ENCODE measurements at regions of chr9 and their contacts with region 1.

Region 1: GRCh38 chr9:88041447-88041846 is 67.1 kb upstream of the CDK20 start:
- DNase-seq: no peak
- H3K4me3 ChIP-seq: no peak overlapping the region
- H3K27me3 ChIP-seq: no peaks in the 10 kb centered on the region
- CTCF ChIP-seq: peak; percentile 57

Region 2: GRCh38 chr9:87678650-87679515 is 362.6 kb before region 1 on chr9:
- CTCF ChIA-PET with region 1: interaction called, 14 read pairs
- POLR2A ChIA-PET with region 1: no interaction called
- DNase-seq: no peak
- H3K4me3 ChIP-seq: no peak overlapping the region
- H3K27me3 ChIP-seq: no peaks in the 10 kb centered on the region
- CTCF ChIP-seq: peak; percentile 82

Region 3: DNA sequence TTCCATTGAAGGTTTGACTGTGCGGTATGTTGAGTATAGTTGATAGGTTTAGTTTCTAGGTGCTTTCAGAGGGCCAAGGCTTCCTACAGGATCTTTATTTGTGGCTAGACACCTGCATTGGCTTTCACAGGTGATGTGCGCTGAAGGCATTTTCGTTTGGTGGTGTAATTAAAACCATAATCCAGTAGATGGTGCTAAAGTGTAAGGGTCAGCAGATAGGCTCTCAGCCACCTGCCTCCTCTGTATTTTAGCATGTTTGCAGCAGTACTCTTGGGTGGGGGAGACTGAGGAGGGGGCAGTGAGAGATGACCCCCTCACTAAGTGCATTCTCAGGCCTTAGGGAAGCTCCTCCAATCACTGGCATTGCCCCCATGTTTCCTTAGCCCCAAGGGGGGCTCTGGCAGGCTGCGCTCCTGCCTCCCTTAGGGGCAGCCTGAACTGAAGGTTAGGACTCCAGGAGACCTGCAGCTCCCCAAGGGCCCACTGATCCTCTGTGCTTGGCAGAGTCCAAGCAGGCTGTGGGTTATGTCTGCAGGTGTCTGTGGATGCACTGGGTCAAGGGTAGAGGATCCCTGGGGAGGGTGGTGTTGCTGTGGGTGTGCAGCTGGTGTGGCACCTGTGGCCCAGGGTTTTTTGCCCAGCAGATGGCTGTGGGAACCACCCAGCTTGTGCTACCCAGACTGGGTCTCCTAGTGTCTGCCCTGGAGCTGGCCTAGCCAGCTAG is 90.5 kb before region 1 on chr9:
- CTCF ChIA-PET with region 1: interaction called, 11 read pairs
- POLR2A ChIA-PET with region 1: no interaction called
- DNase-seq: no peak
- H3K4me3 ChIP-seq: no peak overlapping the region
- H3K27me3 ChIP-seq: no peaks in the 10 kb centered on the region; the same call in 1 of the 2 replicates
- CTCF ChIP-seq: peak; percentile 54

Region 4: DNA sequence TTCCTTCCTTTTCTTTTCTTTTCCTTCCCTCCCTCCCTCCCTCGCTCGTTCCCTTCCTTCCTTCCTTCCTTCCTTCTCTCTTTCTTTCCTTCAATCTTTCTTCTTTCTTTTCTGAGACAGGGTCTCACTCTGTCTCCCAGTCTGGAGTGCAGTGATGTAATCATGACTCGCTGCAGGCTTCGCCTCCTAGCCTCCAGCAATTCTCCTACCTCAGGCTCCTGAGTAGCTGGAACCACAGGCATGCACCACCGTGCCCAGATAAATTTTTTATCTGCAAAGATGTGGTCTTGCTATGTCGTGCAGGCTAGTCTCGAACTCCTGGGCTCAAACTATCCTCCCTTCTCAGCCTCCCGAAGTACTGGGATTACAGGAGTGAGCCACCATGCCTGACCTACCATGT is 15.4 kb after region 1 on chr9:
- CTCF ChIA-PET with region 1: no interaction called
- POLR2A ChIA-PET with region 1: no interaction called
- DNase-seq: no peak
- H3K4me3 ChIP-seq: no peak overlapping the region
- H3K27me3 ChIP-seq: no peaks in the 10 kb centered on the region
- CTCF ChIP-seq: no peak

Region 5: DNA sequence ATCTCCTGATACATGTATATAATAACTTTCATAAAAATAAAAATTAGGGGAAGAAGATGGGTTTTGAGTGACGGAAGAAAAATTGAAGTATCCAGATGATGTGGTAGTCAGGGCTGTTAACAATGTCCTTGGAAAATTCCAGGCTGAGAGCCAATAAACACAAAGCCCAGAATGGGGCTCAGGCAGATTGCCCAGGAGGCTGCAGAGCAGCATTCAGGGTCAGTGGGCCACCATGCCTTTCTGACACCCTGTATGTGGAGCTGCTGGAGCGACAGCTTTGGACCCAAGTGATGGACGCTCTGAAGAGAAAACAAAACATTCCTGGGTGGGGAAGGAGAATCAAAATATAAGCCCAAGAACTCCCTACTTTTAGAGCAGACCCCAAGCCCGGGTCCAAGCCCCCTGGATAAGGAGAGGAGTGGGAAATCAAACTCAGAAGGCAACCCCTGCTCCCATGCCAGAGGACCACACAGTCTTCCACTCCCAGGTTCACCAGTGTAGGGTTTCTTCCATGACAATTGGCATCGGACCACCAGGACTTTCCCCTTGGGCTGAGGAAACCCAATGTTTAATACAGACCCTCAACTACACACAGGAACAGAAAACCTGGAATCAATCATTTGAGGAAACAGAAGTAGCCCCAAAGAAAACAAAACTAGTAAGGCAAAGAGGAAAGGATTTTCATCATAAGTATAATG is 142.5 kb after region 1 on chr9:
- CTCF ChIA-PET with region 1: no interaction called
- POLR2A ChIA-PET with region 1: no interaction called
- DNase-seq: no peak
- H3K4me3 ChIP-seq: no peak overlapping the region
- H3K27me3 ChIP-seq: no peaks in the 10 kb centered on the region; the same call in 1 of the 2 replicates
- CTCF ChIP-seq: no peak

Measured in BJ (cell line).